Left colon (tissue), 2 donors: ENCODE measurements at regions of chr2 and their contacts with region 1.

Region 1: GRCh38 chr2:70142590-70143313 is 48.1 kb downstream of the C2orf42 start:
- DNase-seq: peak; percentile 98 to 100
- ATAC-seq: peak; percentile 78

Region 2: DNA sequence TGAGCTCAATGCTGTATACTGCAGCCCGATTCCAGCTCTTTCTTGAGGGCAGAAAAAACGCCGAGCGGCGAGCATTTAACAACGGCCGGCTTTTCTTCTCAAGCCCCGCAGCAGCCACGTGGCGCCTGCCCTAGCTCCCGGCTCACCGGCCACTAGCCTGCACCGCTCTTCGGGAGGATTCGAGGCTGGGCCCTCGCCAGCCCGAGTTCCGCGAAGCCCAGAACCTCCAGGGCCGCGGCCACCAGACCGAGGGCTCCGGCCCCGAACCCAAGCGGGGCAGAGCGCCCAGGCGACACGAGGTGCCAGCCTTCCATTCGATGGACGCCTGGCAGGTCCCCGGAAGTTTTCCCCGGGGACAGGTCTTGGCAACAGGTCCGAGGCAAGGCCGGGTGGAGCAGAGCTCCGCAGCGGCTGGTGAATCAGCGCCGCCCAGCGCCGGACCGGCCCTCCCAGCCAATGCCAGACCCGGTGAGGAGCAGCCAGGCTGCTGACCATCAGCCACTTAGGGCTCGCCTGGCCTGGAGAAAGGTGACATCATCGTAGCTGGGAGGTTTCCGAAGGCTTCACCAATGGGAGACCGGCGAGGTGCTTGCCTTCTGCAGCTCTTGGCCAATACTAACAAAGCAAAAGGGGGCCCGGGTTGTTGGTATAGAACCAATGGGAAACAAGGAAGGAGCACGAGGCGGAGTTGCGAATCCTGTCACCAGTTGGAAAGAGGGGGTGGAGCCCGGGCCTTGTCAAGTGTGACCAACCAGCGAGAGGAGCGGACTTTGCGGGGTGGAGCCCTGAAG is 228.4 kb before region 1 on chr2:
- intact Hi-C with region 1: loop called (anchors 5 kb)
- DNase-seq: peak in 1 of 2 donors; percentile 100
- ATAC-seq: peak; percentile 81

Region 3: GRCh38 chr2:70086838-70087701 is 55.7 kb before region 1 on chr2 and contains the start of gene PCBP1:
- intact Hi-C with region 1: loop called in 1 of 2 experiments (anchors 5 kb)
- DNase-seq: peak; percentile 94 to 98
- ATAC-seq: peak; percentile 74
- total RNA-seq, gene PCBP1: 263 to 293 TPM